ENCODE measurements at regions of chr11 and their contacts with region 1.

Region 1: GRCh38 chr11:100776212-100776896 is 89.3 kb downstream of the ARHGAP42 start:
- DNase-seq: no peak
- H3K4me3 ChIP-seq: no peak overlapping the region
- H3K27ac ChIP-seq: no peak overlapping the region
- H3K4me1 ChIP-seq: no peaks in the 10 kb centered on the region
- H3K27me3 ChIP-seq: no peaks in the 10 kb centered on the region
- CTCF ChIP-seq: no peak
- EP300 ChIP-seq: no peak
- POLR2A ChIP-seq: no peak

Region 2: DNA sequence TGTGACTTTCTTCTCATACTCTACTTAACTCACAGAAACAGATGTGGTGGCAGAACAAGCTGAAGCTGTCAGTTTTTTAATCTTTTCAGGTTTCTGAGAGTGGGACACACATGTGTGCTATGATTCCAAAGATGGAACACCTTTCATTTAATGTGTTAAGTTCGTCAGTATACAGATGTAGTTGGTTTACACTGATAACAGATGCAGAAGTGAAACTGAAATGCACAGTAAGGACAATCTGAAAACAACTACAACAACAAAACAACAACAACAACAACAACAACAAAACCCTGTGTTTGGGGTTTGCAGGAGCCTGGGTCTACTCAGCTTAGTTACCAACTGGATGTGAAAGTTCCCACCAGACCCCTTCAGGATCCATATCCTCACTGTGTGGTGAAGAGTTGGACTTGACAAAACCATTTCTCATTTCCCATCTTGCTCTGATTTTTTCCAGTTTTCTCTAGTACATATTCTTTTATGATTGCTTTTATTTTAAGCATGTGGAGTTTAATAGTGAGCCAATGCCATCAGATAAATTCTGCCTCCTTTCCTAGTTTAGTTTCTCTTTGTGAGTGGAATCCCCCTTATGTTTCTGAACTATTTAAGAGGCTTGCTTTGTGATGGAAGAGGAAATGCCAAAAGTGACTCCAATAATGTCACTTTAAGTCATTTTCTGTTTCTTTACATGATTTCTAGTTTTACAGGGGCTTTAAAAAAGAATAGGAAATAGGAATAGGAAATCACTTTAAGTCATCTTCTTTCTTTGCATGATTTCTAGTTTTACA is 41.4 kb before region 1 on chr11:
- intact Hi-C with region 1: loop called (anchors 5 kb)
- DNase-seq: no peak
- H3K4me3 ChIP-seq: no peak overlapping the region
- H3K27ac ChIP-seq: no peak overlapping the region
- H3K4me1 ChIP-seq: peaks cover 10 to 15% (median 13%) of the 10 kb centered on the region in 4 donors
- H3K27me3 ChIP-seq: no peaks in the 10 kb centered on the region
- CTCF ChIP-seq: no peak
- EP300 ChIP-seq: no peak
- POLR2A ChIP-seq: no peak